SK-N-SH (cell line): ENCODE measurements at regions of chr18 and their contacts with region 1.

Region 1: DNA sequence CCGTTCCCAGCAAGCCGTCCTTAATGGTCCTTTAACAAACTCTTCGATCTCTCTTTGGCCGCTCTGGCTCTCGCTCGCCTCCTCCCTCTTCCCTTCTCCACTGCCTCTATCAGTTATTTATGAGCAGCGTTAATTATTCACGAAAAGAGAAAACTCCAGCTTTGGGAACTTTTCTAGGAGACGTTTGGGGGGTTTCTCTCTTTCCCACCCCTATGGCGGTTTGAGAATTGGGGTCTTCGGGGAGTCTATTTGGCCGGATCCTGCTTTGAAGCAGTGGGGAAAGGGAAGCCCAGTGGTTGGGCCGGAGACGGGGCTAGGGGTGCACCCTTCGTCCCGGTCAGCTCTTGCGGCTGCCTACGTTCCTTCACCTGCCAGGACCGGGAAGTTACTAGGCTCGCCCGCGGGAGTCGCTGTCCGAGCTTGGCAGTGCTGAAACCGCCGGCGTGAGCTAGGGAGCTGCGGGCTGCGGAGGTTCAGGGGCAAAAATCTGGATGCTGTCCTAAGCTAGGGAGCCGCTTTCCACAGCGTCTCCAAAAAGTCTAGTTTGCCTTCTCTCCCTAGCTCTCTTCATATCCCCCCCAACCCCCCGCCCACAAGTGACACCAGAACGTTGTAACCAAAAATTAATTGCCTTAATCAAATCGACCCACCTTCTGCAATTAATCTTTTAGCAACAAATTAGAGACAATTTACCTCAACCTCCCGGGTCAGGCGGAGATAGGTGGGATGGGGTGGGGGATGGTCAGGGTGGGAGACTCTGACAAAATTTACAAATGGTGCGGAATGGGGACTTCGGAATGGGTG is 8.9 kb upstream of the SKOR2 start:
- DNase-seq: peak; percentile 78
- H3K4me3 ChIP-seq: no peak overlapping the region
- H3K27ac ChIP-seq: no peak overlapping the region
- H3K4me1 ChIP-seq: peaks cover 0 to 8% of the 10 kb centered on the region in 2 experiments; a peak in 1 of 4 replicates
- H3K27me3 ChIP-seq: peaks cover 30% of the 10 kb centered on the region; the same call in 1 of the 2 replicates
- CTCF ChIP-seq: no peak
- EP300 ChIP-seq: no peak
- RAD21 ChIP-seq: peak; percentile 12; the same call in 1 of the 2 replicates

Region 2: GRCh38 chr18:47274961-47275360 is 14.6 kb after region 1 on chr18:
- CTCF ChIA-PET with region 1: interaction called, 115 read pairs
- POLR2A ChIA-PET with region 1: no interaction called
- DNase-seq: no peak
- H3K4me3 ChIP-seq: no peak overlapping the region
- H3K27ac ChIP-seq: no peak overlapping the region
- H3K4me1 ChIP-seq: no peaks in the 10 kb centered on the region
- H3K27me3 ChIP-seq: no peaks in the 10 kb centered on the region
- CTCF ChIP-seq: no peak
- EP300 ChIP-seq: no peak
- RAD21 ChIP-seq: no peak

Region 3: GRCh38 chr18:47313901-47314300 is 53.6 kb after region 1 on chr18:
- CTCF ChIA-PET with region 1: no interaction called
- POLR2A ChIA-PET with region 1: no interaction called
- DNase-seq: no peak
- H3K4me3 ChIP-seq: no peak overlapping the region
- H3K27ac ChIP-seq: no peak overlapping the region
- H3K4me1 ChIP-seq: no peaks in the 10 kb centered on the region
- H3K27me3 ChIP-seq: no peaks in the 10 kb centered on the region
- CTCF ChIP-seq: no peak
- EP300 ChIP-seq: no peak
- RAD21 ChIP-seq: no peak